ENCODE measurements at regions of chr17 and their contacts with region 1.

Region 1: DNA sequence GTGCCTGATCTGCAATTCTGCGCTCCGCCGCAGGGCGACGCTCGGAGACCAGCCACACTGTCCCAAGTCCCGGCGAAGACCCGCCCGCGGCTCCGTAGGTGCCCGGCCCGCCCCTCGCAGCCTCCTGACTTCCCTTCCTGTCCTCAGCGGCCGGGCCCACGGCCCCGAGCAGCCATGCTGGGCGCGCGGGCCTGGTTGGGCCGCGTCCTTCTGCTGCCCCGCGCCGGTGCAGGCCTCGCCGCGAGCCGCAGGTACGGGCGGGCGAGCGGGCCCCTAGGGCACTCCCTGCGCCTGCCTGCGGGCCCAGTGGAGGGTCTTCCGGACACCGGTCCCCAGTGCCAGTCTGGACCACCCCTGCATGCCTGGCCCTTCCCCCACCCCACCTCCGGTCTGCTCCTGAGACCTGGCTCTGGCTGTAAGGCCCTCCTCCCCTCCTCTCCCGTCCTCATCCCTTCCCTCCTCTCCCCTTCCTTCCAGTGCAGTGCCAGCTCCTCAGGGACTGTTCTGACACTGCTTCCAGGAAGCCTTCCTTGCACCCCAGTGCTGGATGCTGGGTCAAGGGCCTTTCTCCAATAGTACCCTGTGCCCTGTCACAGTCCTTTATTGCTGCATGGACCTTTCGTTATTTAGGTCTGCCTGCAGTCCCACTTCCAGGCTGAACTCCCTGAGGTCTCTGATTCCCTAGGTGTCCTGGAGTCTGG is at the start of gene SPATA20:
- DNase-seq: peak; percentile 93
- ATAC-seq: peak; percentile 75
- H3K4me3 Mint-ChIP-seq: peak within 1 kb of the TSS; percentile 66
- H3K27ac Mint-ChIP-seq: no peak within 1 kb of the TSS; the same call in 1 of the 2 replicates
- H3K4me1 Mint-ChIP-seq: peaks cover 19% of the 10 kb centered on the region
- H3K27me3 Mint-ChIP-seq: peaks cover 8% of the 10 kb centered on the region
- CTCF ChIP-seq: peak; percentile 95
- total RNA-seq, gene SPATA20: 24.6 to 30.6 TPM (median 26.3 TPM) in 3 replicates

Region 2: DNA sequence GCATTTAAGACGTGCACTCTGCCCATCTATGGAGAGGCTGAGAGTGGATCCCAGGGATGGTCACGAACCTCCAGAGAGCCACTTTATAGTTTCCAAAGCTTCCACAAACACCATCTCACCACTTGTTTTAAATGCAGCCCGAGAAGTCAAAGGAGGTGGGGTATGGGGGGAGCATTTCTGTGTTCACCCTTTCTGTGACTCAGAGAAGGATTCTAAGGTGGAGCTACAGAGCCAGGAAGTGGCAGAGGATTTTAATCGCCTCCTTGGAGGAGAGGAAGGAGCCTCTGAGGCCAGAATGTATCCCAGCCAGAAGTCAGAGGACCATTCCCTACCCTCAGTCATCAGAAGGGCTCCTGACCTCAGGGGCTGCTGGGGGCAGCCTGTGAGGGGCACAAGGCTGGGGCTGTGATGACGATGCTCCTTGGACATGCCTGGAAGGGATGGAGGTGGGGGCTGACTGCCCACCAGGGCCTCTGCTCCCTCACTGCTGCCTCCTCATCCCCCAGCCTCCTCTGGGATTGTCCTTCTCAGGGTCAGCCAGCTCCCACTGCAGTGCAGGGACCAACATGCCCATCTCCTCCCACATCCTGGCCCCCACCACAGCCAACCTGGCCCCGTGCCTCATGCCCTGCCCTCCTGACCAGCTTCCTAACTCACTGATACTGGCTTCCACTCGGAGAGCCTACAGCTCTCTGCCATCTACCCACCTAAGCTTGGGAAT is 198.5 kb before region 1 on chr17:
- CTCF ChIA-PET with region 1: no interaction called
- POLR2A ChIA-PET with region 1: no interaction called
- DNase-seq: no peak
- ATAC-seq: no peak
- H3K4me3 Mint-ChIP-seq: no peak overlapping the region
- H3K27ac Mint-ChIP-seq: no peak overlapping the region
- H3K4me1 Mint-ChIP-seq: peaks cover 32% of the 10 kb centered on the region
- H3K27me3 Mint-ChIP-seq: peaks cover 11% of the 10 kb centered on the region
- CTCF ChIP-seq: no peak

Region 3: DNA sequence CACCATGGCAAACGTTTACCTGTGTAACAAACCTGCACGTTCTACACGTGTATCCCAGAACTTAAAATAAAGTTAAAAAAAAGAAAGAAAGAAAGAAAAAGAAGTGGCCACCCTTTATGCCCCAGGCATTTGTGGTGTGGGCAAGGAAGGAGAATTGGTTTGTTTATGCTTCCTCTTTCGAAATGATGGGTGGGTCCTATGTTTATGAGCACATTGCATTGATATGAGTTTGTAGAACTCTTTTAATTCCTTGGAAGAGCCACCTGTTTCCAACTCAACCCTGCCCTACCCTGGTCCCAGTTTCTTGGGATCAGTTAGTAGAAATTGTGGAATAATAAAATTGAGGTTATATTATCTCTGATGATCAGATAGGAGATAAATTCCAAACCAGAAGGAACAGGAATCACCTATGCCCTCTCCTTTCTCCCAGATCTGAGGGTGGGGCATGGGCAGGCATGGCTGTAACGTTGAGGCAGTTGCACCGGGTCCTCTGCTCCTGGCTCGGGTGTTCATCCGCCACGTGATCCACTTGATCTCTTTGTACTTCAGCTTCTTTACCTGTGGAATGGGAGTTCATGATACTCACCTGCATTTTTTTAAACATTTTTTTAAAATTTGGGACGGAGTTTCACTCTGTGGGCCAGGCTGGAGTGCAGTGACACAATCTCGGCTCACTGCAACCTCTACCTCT is 94.4 kb before region 1 on chr17:
- CTCF ChIA-PET with region 1: no interaction called
- POLR2A ChIA-PET with region 1: no interaction called
- DNase-seq: no peak
- ATAC-seq: no peak
- H3K4me3 Mint-ChIP-seq: no peak overlapping the region
- H3K27ac Mint-ChIP-seq: no peak overlapping the region
- H3K4me1 Mint-ChIP-seq: no peaks in the 10 kb centered on the region
- H3K27me3 Mint-ChIP-seq: no peaks in the 10 kb centered on the region
- CTCF ChIP-seq: no peak

Region 4: DNA sequence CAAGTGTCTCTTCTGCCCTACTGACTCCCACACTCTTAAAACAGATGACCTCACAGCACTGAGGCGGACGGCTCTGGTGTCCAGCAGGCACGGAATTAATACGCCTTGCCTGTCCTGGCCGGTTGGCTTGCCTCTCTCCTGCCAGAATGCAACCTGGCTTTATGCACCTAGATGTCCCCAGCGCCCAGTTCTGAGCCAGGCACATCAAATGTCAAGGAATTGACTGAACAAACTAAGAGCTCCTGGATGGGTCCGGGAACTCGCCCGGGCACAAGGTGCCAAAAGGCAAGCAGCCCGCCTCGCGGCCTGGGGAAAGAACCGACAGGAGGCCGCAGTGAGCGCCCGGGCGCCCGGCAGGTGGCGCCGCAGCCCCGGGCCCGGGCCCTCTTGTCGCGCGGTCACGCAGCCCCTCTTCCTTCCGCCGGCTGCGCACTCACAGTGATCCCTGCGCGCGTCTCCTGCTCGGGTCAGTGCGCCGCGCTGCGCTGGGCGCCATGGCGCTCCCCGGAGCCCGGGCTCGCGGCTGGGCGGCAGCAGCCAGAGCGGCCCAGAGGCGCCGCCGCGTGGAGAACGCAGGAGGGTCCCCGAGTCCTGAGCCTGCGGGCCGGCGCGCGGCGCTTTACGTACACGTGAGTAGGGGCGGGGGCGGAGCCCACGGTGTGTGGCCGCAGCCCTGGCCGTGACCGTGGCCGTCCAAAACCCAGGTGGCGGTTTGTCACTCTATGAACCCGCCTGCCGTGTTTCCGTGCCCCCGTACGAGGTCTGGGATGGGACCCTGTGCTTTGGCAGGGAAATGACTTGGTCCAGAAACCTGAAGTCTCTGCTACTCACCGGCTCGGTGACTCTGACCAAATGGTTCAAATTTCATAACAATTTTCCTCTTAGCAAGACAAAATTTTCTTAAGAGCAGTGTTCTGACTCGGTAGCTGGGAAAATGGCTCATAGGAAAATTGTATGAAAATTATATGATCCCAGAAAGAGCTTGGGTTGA is 68.5 kb before region 1 on chr17 and contains the start of gene RSAD1:
- CTCF ChIA-PET with region 1: interaction called, 21 read pairs
- POLR2A ChIA-PET with region 1: interaction called, 4 read pairs
- DNase-seq: peak; percentile 83
- ATAC-seq: peak; percentile 82
- H3K4me3 Mint-ChIP-seq: peak within 1 kb of the TSS; percentile 81
- H3K27ac Mint-ChIP-seq: peak within 1 kb of the TSS; percentile 68; the same call in 1 of the 2 replicates
- H3K4me1 Mint-ChIP-seq: peaks cover 14% of the 10 kb centered on the region
- H3K27me3 Mint-ChIP-seq: peaks cover 20% of the 10 kb centered on the region
- CTCF ChIP-seq: peak; percentile 61
- total RNA-seq, gene RSAD1: 35.1 to 41.5 TPM (median 40.5 TPM) in 3 replicates

Region 5: GRCh38 chr17:50560185-50560824 is 13.1 kb after region 1 on chr17 and contains the start of gene CACNA1G:
- CTCF ChIA-PET with region 1: interaction called, 135 read pairs
- POLR2A ChIA-PET with region 1: interaction called, 16 read pairs
- DNase-seq: peak; percentile 98
- ATAC-seq: peak; percentile 83
- H3K4me3 Mint-ChIP-seq: peak within 1 kb of the TSS; percentile 87
- H3K27ac Mint-ChIP-seq: peak within 1 kb of the TSS; percentile 97
- H3K4me1 Mint-ChIP-seq: peaks cover 37% of the 10 kb centered on the region
- H3K27me3 Mint-ChIP-seq: peaks cover 75% of the 10 kb centered on the region
- CTCF ChIP-seq: no peak
- total RNA-seq, gene CACNA1G: 5.4 to 6.7 TPM (median 6.2 TPM) in 3 replicates

Region 6: GRCh38 chr17:50575581-50576210 is 28.5 kb after region 1 on chr17:
- CTCF ChIA-PET with region 1: interaction called, 36 read pairs
- POLR2A ChIA-PET with region 1: no interaction called
- DNase-seq: peak; percentile 49
- ATAC-seq: peak; percentile 47
- H3K4me3 Mint-ChIP-seq: no peak overlapping the region
- H3K27ac Mint-ChIP-seq: no peak overlapping the region
- H3K4me1 Mint-ChIP-seq: peaks cover 14% of the 10 kb centered on the region
- H3K27me3 Mint-ChIP-seq: no peaks in the 10 kb centered on the region
- CTCF ChIP-seq: no peak

Region 7: DNA sequence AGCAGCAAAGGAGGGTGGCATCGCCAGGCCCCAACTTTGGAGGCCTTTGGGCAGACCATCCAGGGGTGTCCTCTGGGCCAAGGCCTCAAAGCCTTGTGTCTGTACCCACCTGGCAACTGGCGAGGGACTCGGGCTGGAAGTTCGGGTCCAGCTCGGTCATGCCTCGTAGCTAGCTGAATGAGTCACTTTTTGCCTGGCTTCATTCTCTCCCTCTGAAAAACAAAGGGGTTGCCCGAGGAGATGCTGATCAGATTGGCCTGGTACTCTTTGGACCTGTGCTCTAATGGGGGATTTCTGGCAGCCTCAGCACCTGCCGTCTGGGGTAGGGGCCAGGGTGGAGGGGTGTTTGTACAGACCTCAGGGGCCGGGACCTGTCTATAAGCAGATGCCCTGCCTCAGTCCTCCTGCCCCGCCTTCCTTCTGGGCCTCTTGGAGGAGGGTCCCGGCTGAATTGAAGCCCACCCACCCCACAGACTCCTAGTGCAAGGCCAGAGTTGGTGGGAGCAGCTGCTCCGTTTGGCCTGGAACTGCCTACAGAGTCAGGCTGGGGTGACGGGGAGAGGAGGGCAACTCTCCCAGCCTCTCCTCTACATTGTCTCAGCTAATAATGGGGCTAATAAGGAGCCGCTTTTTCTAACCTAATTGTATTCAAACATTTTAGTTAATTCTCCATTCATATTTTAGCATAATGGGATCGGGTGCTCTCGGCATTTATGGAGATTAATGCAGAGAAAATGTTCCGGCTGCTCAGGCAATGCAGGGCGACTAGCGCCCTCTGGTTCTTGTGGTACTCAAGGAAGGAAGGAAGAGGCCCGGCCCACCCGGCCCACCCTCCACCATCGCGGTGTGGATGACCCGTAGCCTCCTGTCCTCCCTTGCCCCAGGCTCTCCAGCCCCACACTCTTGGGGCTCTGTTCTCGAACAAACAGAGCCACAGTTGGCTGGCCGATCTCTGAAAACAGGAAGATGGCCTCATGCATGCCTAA is 66.1 kb after region 1 on chr17:
- CTCF ChIA-PET with region 1: interaction called, 41 read pairs
- POLR2A ChIA-PET with region 1: interaction called, 3 read pairs
- DNase-seq: no peak
- ATAC-seq: peak; percentile 26; the same call in 1 of the 2 replicates
- H3K4me3 Mint-ChIP-seq: no peak overlapping the region
- H3K27ac Mint-ChIP-seq: no peak overlapping the region
- H3K4me1 Mint-ChIP-seq: peaks cover 11% of the 10 kb centered on the region
- H3K27me3 Mint-ChIP-seq: no peaks in the 10 kb centered on the region
- CTCF ChIP-seq: no peak

Region 8: GRCh38 chr17:50638851-50639767 is 91.9 kb after region 1 on chr17:
- CTCF ChIA-PET with region 1: interaction called, 17 read pairs
- POLR2A ChIA-PET with region 1: no interaction called
- DNase-seq: no peak
- ATAC-seq: no peak
- H3K4me3 Mint-ChIP-seq: no peak overlapping the region
- H3K27ac Mint-ChIP-seq: no peak overlapping the region
- H3K4me1 Mint-ChIP-seq: peaks cover 8% of the 10 kb centered on the region
- H3K27me3 Mint-ChIP-seq: peaks cover 34% of the 10 kb centered on the region
- CTCF ChIP-seq: no peak

Region 9: GRCh38 chr17:50689251-50689650 is 142.1 kb after region 1 on chr17:
- CTCF ChIA-PET with region 1: interaction called, 20 read pairs
- POLR2A ChIA-PET with region 1: interaction called, 4 read pairs
- DNase-seq: no peak
- ATAC-seq: no peak
- H3K4me3 Mint-ChIP-seq: no peak overlapping the region
- H3K27ac Mint-ChIP-seq: no peak overlapping the region
- H3K4me1 Mint-ChIP-seq: peaks cover 27% of the 10 kb centered on the region
- H3K27me3 Mint-ChIP-seq: no peaks in the 10 kb centered on the region
- CTCF ChIP-seq: no peak

Measured in WTC11 (cell line).